ENCODE measurements at regions of chr10 and their contacts with region 1.

Region 1: DNA sequence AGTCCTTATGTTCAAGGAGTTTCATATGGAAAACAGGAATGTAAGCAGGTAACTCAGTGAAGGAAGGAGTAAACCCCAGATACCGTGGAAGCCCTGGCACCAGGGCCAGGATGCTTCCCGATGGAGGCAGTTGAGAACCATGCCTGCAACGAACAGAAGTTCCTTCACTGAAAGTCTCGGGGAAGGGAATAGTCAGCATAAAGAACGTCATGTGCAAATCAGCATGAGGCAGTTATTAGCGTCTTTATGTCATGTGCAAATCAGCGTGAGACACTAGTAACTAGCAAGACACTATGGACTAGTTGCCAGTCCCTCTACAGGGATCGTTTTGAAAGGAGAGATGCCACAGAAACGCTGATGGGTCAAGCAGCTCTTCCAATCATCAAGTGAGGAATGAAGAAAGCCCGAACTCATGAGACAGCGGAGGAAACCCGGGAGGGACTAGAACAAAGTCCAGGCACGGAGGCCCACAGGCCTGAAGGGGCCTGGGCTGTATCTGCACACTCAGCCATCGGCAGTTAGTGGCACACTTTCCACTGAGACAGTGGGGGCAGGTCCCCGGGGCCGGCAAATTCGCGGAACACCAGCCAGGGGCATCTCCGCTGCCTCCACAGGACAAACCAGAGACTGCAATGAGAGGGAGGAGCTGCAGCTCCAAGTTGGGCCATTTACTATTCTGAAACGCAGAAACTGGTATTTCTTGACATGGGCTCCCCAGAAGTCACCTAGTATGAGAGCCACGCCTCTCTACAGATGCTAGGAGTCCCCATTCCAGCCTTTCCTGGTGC is 109.6 kb downstream of the SFMBT2 start:
- DNase-seq: peak; percentile 64

Region 2: GRCh38 chr10:7206412-7207100 is 94.6 kb before region 1 on chr10:
- CTCF ChIA-PET with region 1: no interaction called
- POLR2A ChIA-PET with region 1: no interaction called
- DNase-seq: no peak

Region 3: DNA sequence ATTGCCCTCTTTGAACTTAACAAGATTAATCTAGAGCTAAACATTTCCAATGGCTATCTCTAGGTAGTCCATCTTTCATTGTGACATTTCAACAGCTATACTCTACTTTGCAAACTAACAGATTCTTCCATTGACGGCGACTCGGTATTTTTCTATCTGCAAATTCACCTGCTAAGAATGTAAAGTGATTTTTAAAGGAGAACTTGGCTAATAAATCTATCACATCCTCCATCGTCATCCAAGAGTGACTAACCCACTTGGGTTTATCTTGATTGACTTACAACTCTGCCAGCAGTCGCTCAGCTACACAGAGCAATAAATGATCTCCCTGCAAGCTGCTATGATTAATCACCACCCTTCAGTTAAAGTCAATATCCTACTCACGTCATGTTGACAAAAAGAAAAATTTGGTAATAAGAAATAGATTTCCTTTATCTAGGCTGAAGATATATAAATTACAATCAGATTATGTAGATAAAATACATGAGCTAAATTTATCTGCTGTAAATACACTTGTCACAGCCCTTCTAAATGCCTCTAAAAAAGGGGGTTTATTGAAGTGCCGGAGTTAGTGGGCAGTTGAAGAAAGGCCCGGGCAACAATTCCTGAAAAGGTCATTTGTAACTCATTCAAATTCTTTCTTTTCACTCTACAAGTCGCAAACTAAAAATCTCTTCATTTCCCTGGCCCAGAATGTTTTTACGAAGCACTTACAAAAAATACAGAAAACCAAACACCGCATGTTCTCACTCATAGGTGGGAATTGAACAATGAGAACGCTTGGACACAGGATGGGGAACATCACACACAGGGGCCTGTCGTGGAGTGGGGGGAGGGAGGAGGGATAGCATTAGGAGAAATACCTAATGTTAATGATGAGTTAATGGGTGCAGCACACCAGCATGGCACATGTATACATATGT is 10.3 kb after region 1 on chr10:
- CTCF ChIA-PET with region 1: interaction called, 6 read pairs
- POLR2A ChIA-PET with region 1: interaction called, 11 read pairs
- DNase-seq: peak; percentile 76